CD14-positive monocyte (primary cell): ENCODE measurements at regions of chr18 and their contacts with region 1.

Region 1: GRCh38 chr18:8601277-8602032 is 7.8 kb upstream of the RAB12 start:
- DNase-seq: peak; percentile 66 to 74 (median 73)
- H3K4me3 ChIP-seq: peak overlapping the region in 1 of 3 experiments; percentile 16
- H3K4me3 Mint-ChIP-seq: peak overlapping the region in 1 of 2 donors; percentile 32
- H3K27ac ChIP-seq: peak overlapping the region in 1 of 2 donors; percentile 71
- H3K27ac Mint-ChIP-seq: peak overlapping the region; percentile 0 to 84 (median 54)
- H3K4me1 ChIP-seq: peaks cover 44 to 45% of the 10 kb centered on the region in 2 donors
- H3K4me1 Mint-ChIP-seq: peaks cover 40% of the 10 kb centered on the region
- H3K27me3 ChIP-seq: no peaks in the 10 kb centered on the region
- H3K27me3 Mint-ChIP-seq: peaks cover 0 to 4% (median 3%) of the 10 kb centered on the region in 3 donors
- CTCF ChIP-seq: no peak

Region 2: DNA sequence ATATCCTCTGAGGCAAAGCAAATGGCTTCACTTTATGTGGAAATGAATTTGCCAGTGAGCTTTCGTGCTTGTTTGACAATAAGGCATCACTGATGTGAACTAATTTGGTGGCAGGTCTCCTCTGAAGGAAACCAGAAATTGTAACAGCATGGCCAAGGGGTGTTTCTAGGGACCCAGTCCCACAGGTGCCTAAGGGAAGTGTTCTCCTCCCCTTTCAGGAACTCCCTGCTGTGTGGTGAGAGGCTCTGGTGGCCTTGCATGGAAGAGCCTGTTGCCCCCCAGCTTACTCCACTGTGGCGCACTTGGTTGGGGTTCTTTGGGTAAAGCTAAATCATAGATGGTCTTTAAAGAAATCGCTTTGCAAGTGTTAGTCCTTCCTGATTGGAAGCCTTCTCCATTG is 28.1 kb after region 1 on chr18:
- intact Hi-C with region 1: loop called in 1 of 2 experiments (anchors 2 kb)
- DNase-seq: no peak
- H3K4me3 ChIP-seq: no peak overlapping the region
- H3K4me3 Mint-ChIP-seq: no peak overlapping the region
- H3K27ac ChIP-seq: no peak overlapping the region
- H3K27ac Mint-ChIP-seq: peak overlapping the region in 3 of 7 donors; percentile 15 to 33 (median 17)
- H3K4me1 ChIP-seq: peaks cover under 1 to 1% of the 10 kb centered on the region in 2 donors
- H3K4me1 Mint-ChIP-seq: peaks cover under 1% of the 10 kb centered on the region
- H3K27me3 ChIP-seq: no peaks in the 10 kb centered on the region
- H3K27me3 Mint-ChIP-seq: peaks cover 0 to 2% (median 0%) of the 10 kb centered on the region in 3 donors
- CTCF ChIP-seq: no peak

Region 3: GRCh38 chr18:8654503-8655451 is 53.3 kb after region 1 on chr18:
- intact Hi-C with region 1: no loop called
- DNase-seq: peak in 1 of 3 donors; percentile 20
- H3K4me3 ChIP-seq: no peak overlapping the region
- H3K4me3 Mint-ChIP-seq: no peak overlapping the region
- H3K27ac ChIP-seq: no peak overlapping the region
- H3K27ac Mint-ChIP-seq: peak overlapping the region in 1 of 7 donors; percentile 47
- H3K4me1 ChIP-seq: no peaks in the 10 kb centered on the region
- H3K4me1 Mint-ChIP-seq: no peaks in the 10 kb centered on the region
- H3K27me3 ChIP-seq: peaks cover 0 to 2% of the 10 kb centered on the region in 2 donors
- H3K27me3 Mint-ChIP-seq: peaks cover 2 to 6% (median 5%) of the 10 kb centered on the region in 3 donors
- CTCF ChIP-seq: peak; percentile 89